ENCODE measurements at regions of chr2 and their contacts with region 1.

Region 1: DNA sequence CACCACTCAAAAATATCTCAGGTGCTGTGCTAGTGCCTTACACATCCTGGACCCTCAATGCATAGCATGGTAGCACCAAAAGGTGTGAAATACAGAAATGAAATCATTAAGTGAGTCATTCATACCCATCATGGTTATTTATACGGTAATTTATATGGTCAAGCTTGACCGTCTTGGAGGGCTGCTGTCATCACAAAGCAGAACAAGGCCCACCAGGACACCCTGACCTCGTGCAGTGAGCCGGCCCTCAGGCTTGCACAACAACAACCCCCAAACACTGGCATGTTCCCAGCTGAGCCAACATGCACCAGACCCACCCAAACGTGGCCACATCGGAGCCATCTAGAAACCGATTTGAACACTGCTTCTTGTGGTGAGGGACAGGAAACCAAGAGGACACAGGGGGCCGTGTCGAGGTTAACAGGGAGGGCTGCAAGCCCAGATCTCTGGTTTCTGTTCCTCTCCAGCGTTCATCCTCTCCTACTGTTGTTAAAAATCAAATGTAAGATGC is 378.5 kb upstream of the ID2 start:
- H3K4me3 Mint-ChIP-seq: peak overlapping the region; percentile 25
- H3K27ac Mint-ChIP-seq: peak overlapping the region; percentile 87
- H3K4me1 Mint-ChIP-seq: peaks cover 92% of the 10 kb centered on the region
- H3K27me3 Mint-ChIP-seq: no peaks in the 10 kb centered on the region

Region 2: GRCh38 chr2:8174641-8175257 is 128.6 kb before region 1 on chr2:
- intact Hi-C with region 1: loop called (anchors 5 kb)
- H3K4me3 Mint-ChIP-seq: no peak overlapping the region
- H3K27ac Mint-ChIP-seq: peak overlapping the region; percentile 99
- H3K4me1 Mint-ChIP-seq: peaks cover 53% of the 10 kb centered on the region
- H3K27me3 Mint-ChIP-seq: no peaks in the 10 kb centered on the region